ENCODE measurements at regions of chr1 and their contacts with region 1.

Region 1: DNA sequence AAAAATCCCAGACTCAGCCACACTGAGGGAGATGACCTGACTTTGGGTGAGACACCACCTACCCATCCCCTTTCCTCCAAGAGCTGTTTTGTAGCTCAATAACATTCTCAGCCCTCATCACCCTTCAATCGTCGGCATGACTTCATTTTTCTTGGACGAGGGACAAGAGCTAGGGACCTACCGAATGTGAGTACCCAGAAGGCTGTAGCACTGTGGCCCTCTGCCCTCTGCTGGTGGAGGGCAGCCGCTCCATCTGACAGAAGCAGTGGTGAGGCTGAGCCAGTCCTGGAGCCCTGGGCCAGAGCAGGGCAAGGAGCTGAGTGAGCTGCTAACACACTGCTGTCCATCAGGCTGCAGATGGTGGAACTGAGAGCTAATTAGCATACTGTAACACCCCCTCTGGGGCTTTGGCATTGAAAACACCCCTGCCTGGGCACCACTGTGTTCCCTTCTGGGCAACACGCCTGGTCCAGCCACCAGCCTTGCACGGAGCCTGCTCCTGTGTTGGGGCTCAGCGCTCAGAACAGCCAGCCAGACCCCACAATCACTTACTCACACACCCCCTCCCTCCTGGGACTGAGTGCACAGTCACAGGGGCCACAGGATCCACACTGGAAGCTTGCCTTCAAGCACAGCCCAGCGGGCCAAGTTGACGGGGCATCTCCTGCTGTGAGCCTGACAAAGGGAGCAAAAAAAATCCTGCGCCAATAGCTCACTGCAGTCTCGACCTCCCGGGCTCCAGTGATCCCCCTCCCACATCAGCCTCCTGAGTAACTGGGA is 18.3 kb upstream of the ALPL start:
- DNase-seq: no peak
- ATAC-seq: peak; percentile 34
- H3K4me3 ChIP-seq: no peak overlapping the region
- H3K4me3 Mint-ChIP-seq: no peak overlapping the region
- H3K27ac ChIP-seq: no peak overlapping the region
- H3K27ac Mint-ChIP-seq: no peak overlapping the region
- H3K4me1 ChIP-seq: peaks cover 0 to 4% of the 10 kb centered on the region in 2 donors
- H3K4me1 Mint-ChIP-seq: peaks cover 4 to 11% (median 8%) of the 10 kb centered on the region in 7 donors
- H3K27me3 ChIP-seq: no peaks in the 10 kb centered on the region
- H3K27me3 Mint-ChIP-seq: peaks cover 11 to 21% (median 16%) of the 10 kb centered on the region in 5 donors

Region 2: DNA sequence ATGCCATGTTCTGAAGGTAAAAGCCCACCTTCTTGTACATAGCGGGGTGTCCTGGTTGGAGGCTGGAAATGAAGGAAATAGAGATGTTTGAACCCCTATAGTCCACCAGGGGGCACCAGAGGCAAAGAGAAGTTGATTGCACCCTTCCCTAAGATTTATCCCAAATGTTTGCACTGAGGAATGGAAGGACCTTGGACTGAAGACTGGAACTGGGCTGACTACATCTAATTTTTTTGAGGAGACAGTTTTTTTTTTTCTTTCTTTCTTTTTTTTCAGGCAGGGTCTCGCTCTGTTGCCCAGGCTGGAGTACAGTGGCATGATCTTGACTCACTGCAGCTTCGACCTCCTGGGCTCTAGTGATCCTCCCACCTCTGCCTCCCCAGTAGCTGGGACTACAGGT is 258.9 kb before region 1 on chr1:
- CTCF ChIA-PET with region 1: no interaction called
- POLR2A ChIA-PET with region 1: no interaction called
- intact Hi-C with region 1: loop called in 1 of 2 experiments (anchors 10 kb)
- DNase-seq: peak in 6 of 9 donors; percentile 20 to 53 (median 42)
- ATAC-seq: peak; percentile 76
- H3K4me3 ChIP-seq: no peak overlapping the region
- H3K4me3 Mint-ChIP-seq: no peak overlapping the region
- H3K27ac ChIP-seq: no peak overlapping the region
- H3K27ac Mint-ChIP-seq: peak overlapping the region in 2 of 9 donors; percentile 8 to 29
- H3K4me1 ChIP-seq: no peaks in the 10 kb centered on the region
- H3K4me1 Mint-ChIP-seq: no peaks in the 10 kb centered on the region
- H3K27me3 ChIP-seq: no peaks in the 10 kb centered on the region
- H3K27me3 Mint-ChIP-seq: no peaks in the 10 kb centered on the region